ENCODE measurements at regions of chr7 and their contacts with region 1.

Region 1: GRCh38 chr7:7182156-7183060 is at the start of gene C1GALT1:
- DNase-seq: peak; percentile 95
- ATAC-seq: peak; percentile 87
- H3K4me3 ChIP-seq: peak within 1 kb of the TSS; percentile 79 to 96 (median 83)
- H3K27ac ChIP-seq: peak within 1 kb of the TSS; percentile 98
- H3K4me1 ChIP-seq: peaks cover 63% of the 10 kb centered on the region
- H3K27me3 ChIP-seq: no peaks in the 10 kb centered on the region; a peak in 1 of 5 replicates
- CTCF ChIP-seq: peak; percentile 77
- EP300 ChIP-seq: peak; percentile 11 to 36; a peak in 1 of 4 replicates
- POLR2A ChIP-seq: peak; percentile 90 to 96
- RAD21 ChIP-seq: peak; percentile 73
- total RNA-seq, gene C1GALT1: 65.9 and 68.2 TPM in 2 replicates

Region 2: DNA sequence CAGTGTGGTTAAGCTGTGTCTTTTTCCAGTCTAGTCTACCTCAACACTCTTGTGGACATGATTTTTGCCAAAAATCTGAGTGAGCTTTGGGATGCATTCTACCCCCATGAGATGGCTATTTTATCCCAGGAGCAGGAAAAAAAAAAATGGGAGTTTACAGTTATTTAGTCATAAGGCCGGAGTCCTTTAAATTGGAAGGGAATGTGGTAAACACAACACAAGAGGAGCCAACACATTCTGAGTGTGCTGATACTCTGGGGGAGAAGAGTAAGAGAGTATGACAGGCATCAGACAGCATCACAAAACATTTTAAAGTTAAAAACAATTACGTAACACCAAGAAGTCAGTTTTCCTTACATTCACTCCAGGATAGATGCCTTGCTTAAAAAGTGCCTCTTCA is 46.1 kb after region 1 on chr7:
- CTCF ChIA-PET with region 1: no interaction called
- POLR2A ChIA-PET with region 1: no interaction called
- in situ Hi-C with region 1: no loop called
- intact Hi-C with region 1: loop called (anchors 5 kb)
- DNase-seq: no peak
- ATAC-seq: no peak
- H3K4me3 ChIP-seq: no peak overlapping the region
- H3K27ac ChIP-seq: no peak overlapping the region
- H3K4me1 ChIP-seq: no peaks in the 10 kb centered on the region
- H3K27me3 ChIP-seq: no peaks in the 10 kb centered on the region
- CTCF ChIP-seq: no peak
- EP300 ChIP-seq: no peak
- POLR2A ChIP-seq: no peak
- RAD21 ChIP-seq: no peak

Region 3: DNA sequence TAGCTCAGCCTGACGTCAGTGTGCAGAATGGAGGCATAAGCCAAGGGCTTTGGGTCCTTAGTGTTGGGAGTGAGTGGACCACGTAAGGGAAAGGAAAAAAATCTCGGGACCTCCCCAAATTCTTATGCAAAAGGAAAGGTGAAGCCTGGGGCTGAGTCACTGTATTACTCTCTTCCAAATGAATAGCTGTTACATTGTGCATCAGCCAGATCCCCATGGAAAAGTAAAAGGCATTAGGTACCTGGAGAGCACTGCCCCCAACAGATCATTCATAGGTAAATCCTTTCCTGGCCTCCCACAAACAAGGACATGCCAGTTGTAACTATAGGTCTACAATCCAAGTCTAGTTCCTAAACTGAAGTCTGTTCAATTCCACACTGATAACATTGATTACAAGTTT is 170.4 kb after region 1 on chr7:
- CTCF ChIA-PET with region 1: no interaction called
- POLR2A ChIA-PET with region 1: no interaction called
- in situ Hi-C with region 1: no loop called
- intact Hi-C with region 1: loop called (anchors 1 kb)
- DNase-seq: peak; percentile 12
- ATAC-seq: peak; percentile 69
- H3K4me3 ChIP-seq: no peak overlapping the region
- H3K27ac ChIP-seq: no peak overlapping the region
- H3K4me1 ChIP-seq: no peaks in the 10 kb centered on the region
- H3K27me3 ChIP-seq: no peaks in the 10 kb centered on the region
- CTCF ChIP-seq: peak; percentile 56
- EP300 ChIP-seq: no peak
- POLR2A ChIP-seq: no peak
- RAD21 ChIP-seq: no peak

Region 4: GRCh38 chr7:7535691-7536090 is 353.3 kb after region 1 on chr7 and contains the start of gene COL28A1:
- CTCF ChIA-PET with region 1: no interaction called
- POLR2A ChIA-PET with region 1: no interaction called
- in situ Hi-C with region 1: no loop called
- intact Hi-C with region 1: loop called (anchors 2 kb)
- DNase-seq: no peak
- ATAC-seq: no peak
- H3K4me3 ChIP-seq: no peak within 1 kb of the TSS
- H3K27ac ChIP-seq: no peak within 1 kb of the TSS
- H3K4me1 ChIP-seq: no peaks in the 10 kb centered on the region
- H3K27me3 ChIP-seq: no peaks in the 10 kb centered on the region
- CTCF ChIP-seq: no peak
- EP300 ChIP-seq: no peak
- POLR2A ChIP-seq: no peak
- RAD21 ChIP-seq: no peak
- total RNA-seq, gene COL28A1: 0.07 TPM in 1 of 2 replicates, not detected in the other

Measured in HepG2 (cell line).